Activated CD4-positive, alpha-beta memory T cell treated with anti-CD3 and anti-CD28 coated beads for 36 hours (primary cell): ENCODE measurements at regions of chr2 and their contacts with region 1.

Region 1: DNA sequence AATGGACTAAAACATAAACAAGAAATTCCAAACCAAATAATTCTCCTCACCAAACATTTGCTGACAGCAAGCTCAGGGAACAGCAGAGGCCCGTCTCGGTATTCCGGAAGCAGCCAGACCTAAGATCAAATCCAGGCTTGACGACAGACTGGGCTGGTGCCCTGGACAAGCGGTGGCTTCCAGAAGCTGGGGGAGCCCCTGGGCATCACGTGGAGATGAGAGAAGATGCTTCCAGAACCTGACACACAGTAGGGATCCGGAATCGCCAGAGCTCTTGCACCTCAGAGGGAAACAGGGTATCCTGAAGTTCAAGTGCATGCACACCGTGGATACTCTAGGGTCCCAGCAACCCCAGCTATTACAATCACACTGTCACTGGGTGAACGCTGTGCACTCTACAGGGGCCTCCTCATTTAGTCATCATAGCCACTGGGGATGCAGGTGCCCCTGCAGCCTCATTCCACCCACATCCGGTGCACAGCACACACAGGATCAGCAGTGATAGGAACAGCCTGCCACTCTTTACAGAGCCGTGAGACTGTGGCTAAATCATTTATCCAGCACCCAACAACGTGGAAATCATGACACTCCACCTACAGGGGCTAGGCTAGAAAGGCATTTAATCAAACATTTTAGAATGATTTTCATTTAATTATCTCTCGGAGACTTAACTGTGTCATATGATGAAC is 102.6 kb downstream of the HDAC4 start:
- DNase-seq: peak; percentile 90
- H3K4me3 Mint-ChIP-seq: peak overlapping the region; percentile 71
- H3K27ac Mint-ChIP-seq: peak overlapping the region; percentile 76
- H3K4me1 Mint-ChIP-seq: peaks cover 65% of the 10 kb centered on the region
- H3K27me3 Mint-ChIP-seq: peaks cover 12% of the 10 kb centered on the region

Region 2: GRCh38 chr2:239275044-239275685 is 23.1 kb before region 1 on chr2:
- CTCF ChIA-PET with region 1: interaction called, 9 read pairs
- POLR2A ChIA-PET with region 1: interaction called, 3 read pairs
- intact Hi-C with region 1: loop called (anchors 1 kb)
- DNase-seq: peak; percentile 92
- H3K4me3 Mint-ChIP-seq: peak overlapping the region; percentile 61
- H3K27ac Mint-ChIP-seq: peak overlapping the region; percentile 75
- H3K4me1 Mint-ChIP-seq: peaks cover 48% of the 10 kb centered on the region
- H3K27me3 Mint-ChIP-seq: peaks cover 29% of the 10 kb centered on the region

Region 3: GRCh38 chr2:239369631-239370161 is 71.4 kb after region 1 on chr2:
- CTCF ChIA-PET with region 1: interaction called, 3 read pairs
- POLR2A ChIA-PET with region 1: no interaction called
- intact Hi-C with region 1: loop called (anchors 1 kb)
- DNase-seq: peak; percentile 93
- H3K4me3 Mint-ChIP-seq: peak overlapping the region; percentile 68
- H3K27ac Mint-ChIP-seq: peak overlapping the region; percentile 92
- H3K4me1 Mint-ChIP-seq: peaks cover 8% of the 10 kb centered on the region
- H3K27me3 Mint-ChIP-seq: no peaks in the 10 kb centered on the region

Region 4: DNA sequence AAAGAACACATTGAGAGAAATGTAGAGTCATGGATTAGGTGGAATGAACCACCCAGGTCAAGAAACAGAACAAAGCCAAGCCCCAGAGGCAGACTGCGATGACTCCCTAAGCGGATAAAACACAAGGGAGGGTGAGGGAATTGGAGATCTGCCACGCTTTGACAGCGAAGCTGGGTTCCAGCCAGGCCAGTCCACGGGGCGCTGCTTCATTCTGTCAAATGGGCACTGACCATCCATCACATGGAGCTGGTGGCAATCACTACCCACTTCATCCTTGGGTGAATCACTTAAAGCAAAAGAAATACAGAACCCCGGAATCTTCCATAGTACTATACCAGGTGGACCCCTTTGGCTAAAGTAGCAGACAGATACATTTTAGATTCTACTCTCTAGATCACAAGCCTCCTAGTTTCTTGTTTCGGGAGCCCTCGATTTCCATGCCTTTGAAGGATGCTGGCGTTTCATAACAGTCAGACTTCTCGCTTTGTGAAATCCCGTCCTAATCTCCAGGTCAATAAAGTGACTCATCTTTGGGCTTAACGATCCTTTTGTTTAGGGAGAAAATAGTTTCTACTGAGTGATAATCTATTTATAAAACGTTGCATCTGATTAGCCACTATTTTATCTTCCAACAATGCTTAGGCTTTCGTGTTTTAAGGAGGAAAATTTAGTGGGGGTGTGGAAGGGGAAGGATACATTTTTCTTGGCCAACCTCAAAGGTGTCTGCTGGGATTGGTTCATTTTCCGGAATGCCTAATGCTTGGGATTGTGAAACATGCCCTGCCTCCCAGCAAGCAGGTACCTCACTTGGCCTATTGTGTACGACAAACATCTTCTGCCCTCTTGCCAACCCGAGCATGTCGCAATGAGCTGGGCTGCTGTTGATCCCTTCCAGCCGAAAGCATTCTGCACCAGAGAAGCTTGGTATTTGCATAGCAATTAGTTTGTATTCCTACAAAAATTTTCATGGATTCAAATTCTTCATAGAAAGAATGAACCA is 146.7 kb after region 1 on chr2:
- CTCF ChIA-PET with region 1: no interaction called
- POLR2A ChIA-PET with region 1: no interaction called
- intact Hi-C with region 1: no loop called
- DNase-seq: no peak
- H3K4me3 Mint-ChIP-seq: no peak overlapping the region
- H3K27ac Mint-ChIP-seq: no peak overlapping the region
- H3K4me1 Mint-ChIP-seq: peaks cover 11% of the 10 kb centered on the region
- H3K27me3 Mint-ChIP-seq: peaks cover 25% of the 10 kb centered on the region